Activated CD8-positive, alpha-beta T cell treated with anti-CD3 and anti-CD28 coated beads, Interleukin-2, amount 10 ng/mL, durations not matched to agents 7 days and 5 days (primary cell): ENCODE measurements at regions of chr12 and their contacts with region 1.

Region 1: GRCh38 chr12:14995583-14996425 is 23.0 kb downstream of the PDE6H start:
- DNase-seq: no peak
- ATAC-seq: peak; percentile 63
- H3K4me3 Mint-ChIP-seq: no peak overlapping the region
- H3K27ac Mint-ChIP-seq: peak overlapping the region; percentile 37
- H3K4me1 Mint-ChIP-seq: peaks cover 30% of the 10 kb centered on the region
- H3K27me3 Mint-ChIP-seq: peaks cover 19% of the 10 kb centered on the region

Region 2: GRCh38 chr12:14723763-14724162 is 272.0 kb before region 1 on chr12:
- CTCF ChIA-PET with region 1: interaction called, 20 read pairs
- POLR2A ChIA-PET with region 1: no interaction called
- DNase-seq: peak; percentile 68
- ATAC-seq: peak; percentile 76
- H3K4me3 Mint-ChIP-seq: no peak overlapping the region
- H3K27ac Mint-ChIP-seq: no peak overlapping the region
- H3K4me1 Mint-ChIP-seq: no peaks in the 10 kb centered on the region
- H3K27me3 Mint-ChIP-seq: peaks cover 3% of the 10 kb centered on the region

Region 3: GRCh38 chr12:14803011-14803829 is 192.6 kb before region 1 on chr12 and contains the starts of genes C12orf60 and WBP11:
- CTCF ChIA-PET with region 1: interaction called, 10 read pairs
- POLR2A ChIA-PET with region 1: interaction called, 4 read pairs
- DNase-seq: peak; percentile 93
- ATAC-seq: peak; percentile 99
- H3K4me3 Mint-ChIP-seq: no peak within 1 kb of the TSS
- H3K27ac Mint-ChIP-seq: no peak within 1 kb of the TSS
- H3K4me1 Mint-ChIP-seq: peaks cover 33% of the 10 kb centered on the region
- H3K27me3 Mint-ChIP-seq: no peaks in the 10 kb centered on the region
- total RNA-seq, gene C12orf60: 1.4 to 1.5 TPM
- total RNA-seq, gene WBP11: 98.2 to 98.6 TPM

Region 4: GRCh38 chr12:14845350-14845750 is 150.5 kb before region 1 on chr12:
- CTCF ChIA-PET with region 1: interaction called, 89 read pairs
- POLR2A ChIA-PET with region 1: no interaction called
- DNase-seq: peak; percentile 61
- ATAC-seq: peak; percentile 53
- H3K4me3 Mint-ChIP-seq: no peak overlapping the region
- H3K27ac Mint-ChIP-seq: peak overlapping the region; percentile 0
- H3K4me1 Mint-ChIP-seq: peaks cover 4% of the 10 kb centered on the region
- H3K27me3 Mint-ChIP-seq: no peaks in the 10 kb centered on the region

Region 5: GRCh38 chr12:14937689-14938088 is 58.1 kb before region 1 on chr12:
- CTCF ChIA-PET with region 1: interaction called, 23 read pairs
- POLR2A ChIA-PET with region 1: no interaction called
- DNase-seq: no peak
- ATAC-seq: peak; percentile 56
- H3K4me3 Mint-ChIP-seq: no peak overlapping the region
- H3K27ac Mint-ChIP-seq: peak overlapping the region; percentile 21
- H3K4me1 Mint-ChIP-seq: peaks cover 20% of the 10 kb centered on the region
- H3K27me3 Mint-ChIP-seq: no peaks in the 10 kb centered on the region

Region 6: GRCh38 chr12:14960548-14961465 is 35.0 kb before region 1 on chr12:
- CTCF ChIA-PET with region 1: interaction called, 9 read pairs
- POLR2A ChIA-PET with region 1: interaction called, 15 read pairs
- DNase-seq: peak; percentile 62
- ATAC-seq: peak; percentile 48
- H3K4me3 Mint-ChIP-seq: peak overlapping the region; percentile 98
- H3K27ac Mint-ChIP-seq: peak overlapping the region; percentile 95
- H3K4me1 Mint-ChIP-seq: peaks cover 46% of the 10 kb centered on the region
- H3K27me3 Mint-ChIP-seq: no peaks in the 10 kb centered on the region

Region 7: DNA sequence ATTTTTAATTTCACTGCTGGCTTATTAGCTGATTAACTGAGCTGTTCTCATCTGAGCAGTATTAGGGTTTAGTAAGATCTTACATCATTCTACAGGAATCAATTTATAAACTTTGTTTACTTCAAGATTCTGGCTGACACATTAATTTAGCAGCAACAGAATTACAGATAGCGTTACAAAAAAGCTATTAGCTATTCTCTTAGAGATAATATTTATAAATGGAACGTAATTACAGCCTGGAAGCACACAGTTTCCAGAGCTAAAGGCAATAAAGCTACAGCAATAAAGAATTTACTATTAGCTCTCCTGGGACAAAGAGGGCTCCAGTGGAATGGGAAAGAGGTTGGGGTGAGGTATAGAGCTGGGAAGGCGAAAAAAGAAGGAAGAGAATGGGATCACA is 11.7 kb after region 1 on chr12:
- CTCF ChIA-PET with region 1: interaction called, 12 read pairs
- POLR2A ChIA-PET with region 1: no interaction called
- DNase-seq: no peak
- ATAC-seq: no peak
- H3K4me3 Mint-ChIP-seq: no peak overlapping the region
- H3K27ac Mint-ChIP-seq: no peak overlapping the region
- H3K4me1 Mint-ChIP-seq: no peaks in the 10 kb centered on the region
- H3K27me3 Mint-ChIP-seq: peaks cover 35% of the 10 kb centered on the region